CD8-positive, alpha-beta memory T cell (primary cell): ENCODE measurements at regions of chr7 and their contacts with region 1.

Region 1: DNA sequence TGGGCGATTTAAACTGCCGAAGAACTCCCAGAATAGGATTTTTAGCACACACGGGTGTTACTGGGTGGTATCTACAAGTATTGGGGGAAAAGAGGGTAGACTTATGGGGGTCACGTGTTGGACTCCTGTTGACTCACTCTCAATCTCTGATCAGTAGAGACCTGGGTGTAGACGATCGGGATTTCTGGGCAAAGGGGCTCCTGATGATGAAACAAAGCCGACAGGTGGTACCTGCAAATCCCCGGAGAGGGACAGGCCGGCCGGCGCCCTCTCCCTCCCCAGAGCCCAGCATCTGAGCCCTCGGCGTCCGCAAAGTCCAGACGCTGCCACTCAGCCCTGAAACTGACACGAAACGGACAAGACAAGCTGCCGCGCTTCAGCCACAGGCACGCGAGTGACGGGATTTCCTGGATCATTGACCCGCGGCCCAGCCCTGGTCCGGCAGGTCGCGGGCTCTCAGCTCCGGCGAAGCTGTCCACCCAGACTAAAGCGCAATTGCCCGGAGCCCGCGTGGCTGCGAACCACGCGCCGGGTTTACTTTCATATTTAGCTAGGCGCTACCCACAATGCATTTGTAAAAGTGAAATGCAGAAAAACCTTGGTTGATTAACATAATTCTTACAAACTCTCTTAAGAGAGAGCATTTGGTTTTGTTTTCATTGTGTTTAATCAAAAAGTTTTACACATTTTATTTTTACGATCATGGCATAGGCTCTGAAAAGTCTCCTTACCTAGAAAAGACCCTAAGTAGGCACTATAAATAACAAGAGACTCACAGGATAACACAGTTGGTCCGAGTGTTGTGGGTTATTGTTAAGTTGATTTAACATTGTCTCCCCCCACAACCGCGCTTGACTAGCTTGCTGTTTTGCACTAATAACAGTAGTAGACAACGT is 56.9 kb upstream of the EZH2 start:
- DNase-seq: peak; percentile 53 to 81 (median 76)
- H3K4me3 ChIP-seq: peak overlapping the region; percentile 87
- H3K4me3 Mint-ChIP-seq: peak overlapping the region; percentile 95 to 99 (median 97)
- H3K27ac ChIP-seq: peak overlapping the region; percentile 93
- H3K27ac Mint-ChIP-seq: peak overlapping the region; percentile 95 to 99 (median 97)
- H3K4me1 ChIP-seq: peaks cover 11% of the 10 kb centered on the region
- H3K4me1 Mint-ChIP-seq: peaks cover 16 to 22% (median 20%) of the 10 kb centered on the region in 3 donors
- H3K27me3 ChIP-seq: no peaks in the 10 kb centered on the region
- H3K27me3 Mint-ChIP-seq: no peaks in the 10 kb centered on the region

Region 2: GRCh38 chr7:148698397-148699023 is 242.4 kb before region 1 on chr7 and contains the start of gene CUL1:
- CTCF ChIA-PET with region 1: no interaction called
- POLR2A ChIA-PET with region 1: interaction called, 11 read pairs
- DNase-seq: peak; percentile 78 to 89 (median 83)
- H3K4me3 ChIP-seq: peak within 1 kb of the TSS; percentile 72
- H3K4me3 Mint-ChIP-seq: peak within 1 kb of the TSS; percentile 85 to 96 (median 90)
- H3K27ac ChIP-seq: peak within 1 kb of the TSS; percentile 80
- H3K27ac Mint-ChIP-seq: peak within 1 kb of the TSS; percentile 91 to 95 (median 94)
- H3K4me1 ChIP-seq: peaks cover 42% of the 10 kb centered on the region
- H3K4me1 Mint-ChIP-seq: peaks cover 44 to 59% (median 54%) of the 10 kb centered on the region in 3 donors
- H3K27me3 ChIP-seq: no peaks in the 10 kb centered on the region
- H3K27me3 Mint-ChIP-seq: no peaks in the 10 kb centered on the region
- total RNA-seq, gene CUL1: 92.2 to 93.4 TPM

Region 3: DNA sequence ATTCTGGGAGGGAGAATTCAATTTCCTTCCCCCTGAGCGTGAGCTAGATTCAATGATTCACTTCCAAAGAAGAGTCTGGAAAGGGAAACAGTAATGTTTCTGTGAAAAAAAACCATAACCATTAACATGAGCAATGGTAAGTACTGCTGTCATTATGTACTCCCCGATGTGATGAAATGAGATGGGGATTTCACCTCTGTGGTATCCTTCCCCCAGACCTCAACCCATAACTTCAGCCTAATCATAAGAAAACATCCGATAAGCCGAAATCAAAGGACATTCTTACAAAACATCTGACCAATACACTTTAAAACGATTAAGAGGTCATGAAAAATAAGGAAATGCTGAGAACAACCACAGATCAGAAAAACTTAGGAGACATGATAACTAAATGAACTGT is 84.1 kb before region 1 on chr7:
- CTCF ChIA-PET with region 1: interaction called, 13 read pairs
- POLR2A ChIA-PET with region 1: interaction called, 3 read pairs
- DNase-seq: no peak
- H3K4me3 ChIP-seq: no peak overlapping the region
- H3K4me3 Mint-ChIP-seq: no peak overlapping the region
- H3K27ac ChIP-seq: no peak overlapping the region
- H3K27ac Mint-ChIP-seq: peak overlapping the region in 2 of 8 donors; percentile 7 to 35
- H3K4me1 ChIP-seq: no peaks in the 10 kb centered on the region
- H3K4me1 Mint-ChIP-seq: peaks cover 10 to 46% (median 27%) of the 10 kb centered on the region in 3 donors
- H3K27me3 ChIP-seq: no peaks in the 10 kb centered on the region
- H3K27me3 Mint-ChIP-seq: no peaks in the 10 kb centered on the region